A549 (cell line): ENCODE measurements at regions of chr5 and their contacts with region 1.

Region 1: DNA sequence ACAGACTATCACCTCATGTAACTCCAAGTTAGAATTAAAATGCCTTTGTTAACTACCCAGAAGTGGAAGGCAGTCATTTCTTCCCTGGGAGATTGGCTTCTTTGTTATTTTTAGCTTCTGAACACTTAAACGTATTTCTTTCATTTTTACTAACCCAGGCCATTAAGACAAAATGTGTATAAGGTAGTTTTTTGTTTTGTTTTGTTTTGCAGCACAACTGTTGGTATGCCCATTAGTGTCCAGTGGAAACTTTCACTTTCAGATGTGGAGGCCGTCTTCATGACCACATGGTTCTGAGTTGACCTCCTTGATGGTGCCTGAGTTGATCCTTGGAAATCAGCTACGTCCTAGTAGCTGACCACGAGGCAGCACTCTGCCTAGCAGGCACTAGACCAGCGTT is 264.6 kb upstream of the ZNF608 start:
- DNase-seq: no peak
- ATAC-seq: no peak
- H3K4me3 ChIP-seq: no peak overlapping the region
- H3K27ac ChIP-seq: no peak overlapping the region
- H3K4me1 ChIP-seq: peaks cover 23% of the 10 kb centered on the region
- CTCF ChIP-seq: no peak
- EP300 ChIP-seq: no peak
- POLR2A ChIP-seq: no peak
- RAD21 ChIP-seq: no peak

Region 2: GRCh38 chr5:124732428-124733328 is 278.3 kb before region 1 on chr5:
- CTCF ChIA-PET with region 1: no interaction called
- POLR2A ChIA-PET with region 1: interaction called, 14 read pairs
- DNase-seq: no peak
- ATAC-seq: no peak
- H3K4me3 ChIP-seq: no peak overlapping the region
- H3K27ac ChIP-seq: no peak overlapping the region
- H3K4me1 ChIP-seq: 0 out of 3 replicates have a peak, but pooled peaks cover 2% of the 10 kb centered on the region
- CTCF ChIP-seq: no peak
- EP300 ChIP-seq: no peak
- POLR2A ChIP-seq: no peak
- RAD21 ChIP-seq: no peak

Region 3: DNA sequence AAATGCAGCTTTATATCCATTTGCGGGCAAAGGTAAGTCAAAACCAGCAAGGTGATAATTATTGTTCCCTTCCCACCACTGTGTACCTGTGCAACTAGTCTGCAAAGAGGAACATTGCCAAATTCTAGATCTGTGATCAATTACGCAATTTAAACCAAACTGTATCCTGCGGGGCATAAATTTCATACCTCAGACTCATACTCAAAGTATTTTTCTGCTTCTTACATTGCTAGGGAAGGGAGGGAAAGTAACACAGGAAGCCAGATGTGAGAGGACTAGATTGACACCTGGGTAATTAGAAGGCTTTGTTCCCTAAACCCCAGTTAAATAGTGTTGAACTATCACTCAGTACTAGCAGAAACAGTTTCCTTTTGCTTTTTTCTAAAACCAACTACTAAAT is 24.3 kb before region 1 on chr5:
- CTCF ChIA-PET with region 1: no interaction called
- POLR2A ChIA-PET with region 1: no interaction called
- DNase-seq: no peak
- ATAC-seq: no peak
- H3K4me3 ChIP-seq: no peak overlapping the region
- H3K27ac ChIP-seq: no peak overlapping the region
- H3K4me1 ChIP-seq: 0 out of 3 replicates have a peak, but pooled peaks cover 8% of the 10 kb centered on the region
- CTCF ChIP-seq: no peak
- EP300 ChIP-seq: no peak
- POLR2A ChIP-seq: no peak
- RAD21 ChIP-seq: no peak

Region 4: GRCh38 chr5:125023673-125024072 is 12.7 kb after region 1 on chr5:
- CTCF ChIA-PET with region 1: no interaction called
- POLR2A ChIA-PET with region 1: no interaction called
- DNase-seq: peak in 1 of 2 experiments; percentile 25
- ATAC-seq: peak; percentile 50 to 61; a peak in 4 of 6 replicates
- H3K4me3 ChIP-seq: no peak overlapping the region
- H3K27ac ChIP-seq: no peak overlapping the region
- H3K4me1 ChIP-seq: 0 out of 3 replicates have a peak, but pooled peaks cover 3% of the 10 kb centered on the region
- CTCF ChIP-seq: no peak
- EP300 ChIP-seq: no peak; a peak in 1 of 5 replicates
- POLR2A ChIP-seq: no peak
- RAD21 ChIP-seq: no peak

Region 5: GRCh38 chr5:125044491-125045282 is 33.7 kb after region 1 on chr5:
- CTCF ChIA-PET with region 1: no interaction called
- POLR2A ChIA-PET with region 1: no interaction called
- DNase-seq: peak in 1 of 2 experiments; percentile 30
- ATAC-seq: peak in 1 of 2 experiments; percentile 61; a peak in 3 of 6 replicates
- H3K4me3 ChIP-seq: no peak overlapping the region
- H3K27ac ChIP-seq: peak overlapping the region; percentile 60 to 69
- H3K4me1 ChIP-seq: peaks cover 46% of the 10 kb centered on the region
- CTCF ChIP-seq: no peak
- EP300 ChIP-seq: no peak
- POLR2A ChIP-seq: no peak
- RAD21 ChIP-seq: no peak

Region 6: GRCh38 chr5:125703616-125704015 is 692.6 kb after region 1 on chr5:
- CTCF ChIA-PET with region 1: no interaction called
- POLR2A ChIA-PET with region 1: no interaction called
- DNase-seq: no peak
- ATAC-seq: no peak
- H3K4me3 ChIP-seq: no peak overlapping the region
- H3K27ac ChIP-seq: no peak overlapping the region
- H3K4me1 ChIP-seq: 0 out of 3 replicates have a peak, but pooled peaks cover 2% of the 10 kb centered on the region
- CTCF ChIP-seq: no peak
- EP300 ChIP-seq: no peak
- POLR2A ChIP-seq: no peak
- RAD21 ChIP-seq: no peak